ENCODE measurements at regions of chr11 and their contacts with region 1.

Region 1: DNA sequence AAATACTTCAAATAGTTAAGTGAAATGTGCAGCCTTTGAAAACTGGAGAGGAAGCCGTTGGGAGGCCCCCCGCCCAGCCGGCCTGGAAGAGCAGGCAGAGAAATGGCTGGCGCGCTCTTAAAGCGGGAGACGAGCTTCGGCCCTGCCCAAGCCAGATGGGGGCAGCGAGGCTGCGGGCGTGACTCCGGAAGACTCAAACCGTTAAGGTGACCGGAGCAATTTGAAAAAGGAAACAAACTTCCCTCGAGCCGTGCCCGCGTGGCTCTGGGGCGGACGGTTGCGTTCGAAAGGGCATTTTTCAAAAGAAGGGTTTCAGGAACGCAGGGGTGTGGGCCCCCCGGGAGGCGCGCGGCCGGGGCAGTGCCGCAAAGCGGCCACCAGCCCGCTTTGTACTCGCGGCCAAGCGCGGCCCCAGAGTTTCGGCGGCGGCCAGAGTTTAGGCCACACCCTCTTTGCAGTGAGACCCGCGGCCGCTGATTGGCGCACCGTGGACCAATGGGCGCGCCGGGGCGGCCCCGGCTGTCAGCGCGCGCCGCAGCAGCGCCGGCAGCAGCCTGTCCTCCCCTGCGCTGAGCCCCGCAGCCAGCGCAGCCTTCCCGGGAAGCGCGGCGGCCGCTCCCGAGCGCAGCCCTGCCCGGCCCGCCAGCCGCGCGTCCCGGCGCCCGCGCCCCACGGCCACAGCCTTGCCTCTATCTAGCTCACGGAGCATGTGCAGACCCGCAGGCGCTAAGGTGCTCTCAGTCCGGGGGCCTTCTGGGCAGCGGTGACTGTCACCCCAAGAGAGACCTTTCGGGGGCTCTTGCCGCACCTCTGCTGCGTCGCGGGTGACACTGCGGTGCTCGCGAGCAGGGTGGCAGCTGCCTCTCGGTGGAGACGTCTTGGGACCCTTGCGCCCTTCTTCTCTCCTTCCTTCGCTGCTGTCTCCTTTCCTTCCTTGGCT is at the start of gene NAV2:
- DNase-seq: peak; percentile 92 to 93
- ATAC-seq: peak; percentile 88 to 97 (median 94)
- H3K4me3 ChIP-seq: peak within 1 kb of the TSS; percentile 50 to 83 (median 74)
- H3K27ac ChIP-seq: peak within 1 kb of the TSS; percentile 85 to 98 (median 96)
- H3K4me1 ChIP-seq: peaks cover 7 to 60% (median 47%) of the 10 kb centered on the region in 9 donors
- H3K27me3 ChIP-seq: peaks cover 0 to 33% (median 0%) of the 10 kb centered on the region in 7 donors
- CTCF ChIP-seq: peak in 4 of 9 donors; percentile 4 to 21 (median 13)
- total RNA-seq, gene NAV2: 11.3 to 34.7 (median 23.7) TPM

Region 2: GRCh38 chr11:19441752-19442553 is 270.6 kb before region 1 on chr11:
- intact Hi-C with region 1: no loop called
- DNase-seq: peak; percentile 31 to 45
- ATAC-seq: peak; percentile 38 to 93 (median 82)
- H3K4me3 ChIP-seq: no peak overlapping the region
- H3K27ac ChIP-seq: peak overlapping the region in 6 of 10 donors; percentile 7 to 70 (median 52)
- H3K4me1 ChIP-seq: peaks cover 0 to 16% (median 8%) of the 10 kb centered on the region in 9 donors
- H3K27me3 ChIP-seq: no peaks in the 10 kb centered on the region
- CTCF ChIP-seq: no peak

Region 3: DNA sequence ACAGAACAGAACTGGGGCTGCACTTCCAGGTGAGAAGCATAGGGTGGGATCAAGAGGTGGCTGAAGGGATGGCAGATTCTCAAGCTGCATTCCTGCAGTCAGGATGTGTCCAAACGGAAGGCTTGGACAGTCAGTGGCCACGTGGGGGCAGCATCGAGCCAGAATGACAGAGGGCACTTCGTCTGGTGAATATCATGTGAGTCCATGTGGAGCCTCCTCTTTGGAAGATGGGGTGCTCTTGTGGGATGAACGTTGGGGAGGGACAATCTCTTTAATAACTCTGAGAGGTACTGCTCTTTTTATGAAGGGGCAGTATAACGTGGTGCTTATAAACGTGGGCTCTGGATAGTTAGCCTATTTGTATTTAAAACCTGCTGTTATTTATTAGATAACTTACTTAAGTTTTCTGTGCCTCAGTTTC is 154.8 kb before region 1 on chr11:
- intact Hi-C with region 1: no loop called
- DNase-seq: peak; percentile 83 to 87
- ATAC-seq: peak; percentile 50 to 81 (median 68)
- H3K4me3 ChIP-seq: no peak overlapping the region
- H3K27ac ChIP-seq: no peak overlapping the region
- H3K4me1 ChIP-seq: peaks cover 0 to 19% (median 0%) of the 10 kb centered on the region in 9 donors
- H3K27me3 ChIP-seq: no peaks in the 10 kb centered on the region
- CTCF ChIP-seq: peak; percentile 81 to 94 (median 89)

Region 4: GRCh38 chr11:19628018-19628417 is 84.5 kb before region 1 on chr11:
- intact Hi-C with region 1: loop called in 1 of 10 experiments (anchors 5 kb)
- DNase-seq: peak; percentile 58 to 60
- ATAC-seq: peak; percentile 84 to 97 (median 94)
- H3K4me3 ChIP-seq: no peak overlapping the region
- H3K27ac ChIP-seq: peak overlapping the region in 9 of 10 donors; percentile 24 to 75 (median 54)
- H3K4me1 ChIP-seq: peaks cover 0 to 35% (median 24%) of the 10 kb centered on the region in 9 donors
- H3K27me3 ChIP-seq: no peaks in the 10 kb centered on the region
- CTCF ChIP-seq: no peak

Region 5: GRCh38 chr11:19679952-19680828 is 32.4 kb before region 1 on chr11:
- intact Hi-C with region 1: loop called in 4 of 10 experiments (anchors 2 to 5 kb)
- DNase-seq: peak; percentile 74 to 87
- ATAC-seq: peak; percentile 62 to 88 (median 82)
- H3K4me3 ChIP-seq: no peak overlapping the region
- H3K27ac ChIP-seq: peak overlapping the region; percentile 43 to 89 (median 72)
- H3K4me1 ChIP-seq: peaks cover 23 to 94% (median 71%) of the 10 kb centered on the region in 9 donors
- H3K27me3 ChIP-seq: no peaks in the 10 kb centered on the region
- CTCF ChIP-seq: no peak

Measured in heart right ventricle (tissue), 16 donors.